Stomach (tissue), 19 donors: ENCODE measurements at regions of chr2 and their contacts with region 1.

Region 1: GRCh38 chr2:135709992-135710391 is 31.7 kb upstream of the UBXN4 start:
- DNase-seq: peak; percentile 67 to 79
- H3K4me3 ChIP-seq: no peak overlapping the region
- H3K27ac ChIP-seq: no peak overlapping the region
- H3K4me1 ChIP-seq: no peaks in the 10 kb centered on the region
- H3K27me3 ChIP-seq: no peaks in the 10 kb centered on the region
- CTCF ChIP-seq: peak in 6 of 7 experiments; percentile 6 to 91 (median 88)
- EP300 ChIP-seq: no peak
- POLR2A ChIP-seq: no peak

Region 2: DNA sequence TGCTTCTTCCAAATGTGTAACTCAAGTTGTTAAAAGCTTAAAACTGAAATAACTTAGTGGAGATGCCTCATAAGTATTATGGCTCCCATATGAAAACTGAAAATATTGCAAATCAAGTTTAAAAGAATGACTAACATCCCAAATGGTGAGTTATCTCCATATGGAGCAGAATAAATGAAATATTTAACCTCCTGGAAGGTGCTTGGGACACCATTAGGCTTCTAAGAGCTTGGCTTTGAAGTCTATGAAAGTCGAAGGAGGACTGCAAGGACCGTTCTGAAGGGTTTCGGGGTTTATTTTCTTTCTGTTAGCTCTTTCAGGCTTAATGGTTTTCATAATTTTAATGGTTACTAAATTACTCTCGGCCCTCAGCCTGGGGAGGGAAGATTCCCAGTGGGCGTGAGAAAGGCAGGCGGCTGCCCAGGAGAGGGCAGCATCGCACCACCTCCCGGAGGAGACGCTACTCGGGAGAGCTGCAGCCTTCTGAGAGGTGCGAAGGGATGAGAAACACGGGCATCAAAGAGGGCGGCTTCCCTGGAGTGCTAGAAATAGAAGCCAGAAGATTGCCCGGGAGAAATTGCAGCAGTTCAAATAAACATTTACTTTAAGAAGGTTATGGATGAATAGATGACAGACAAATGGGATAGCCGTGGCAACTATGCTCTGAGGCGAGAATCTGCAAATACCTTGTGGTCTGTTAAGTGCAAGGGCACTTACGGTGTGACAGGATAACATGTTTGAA is 705.8 kb before region 1 on chr2:
- intact Hi-C with region 1: loop called (anchors 10 kb)
- DNase-seq: peak; percentile 80 to 89
- H3K4me3 ChIP-seq: no peak overlapping the region
- H3K27ac ChIP-seq: no peak overlapping the region
- H3K4me1 ChIP-seq: peaks cover 0 to 11% (median 5%) of the 10 kb centered on the region in 4 donors
- H3K27me3 ChIP-seq: peaks cover 0 to 11% (median 0%) of the 10 kb centered on the region in 3 donors
- CTCF ChIP-seq: peak in 5 of 7 experiments; percentile 69 to 89 (median 84)
- EP300 ChIP-seq: no peak
- POLR2A ChIP-seq: no peak

Region 3: GRCh38 chr2:135456431-135456830 is 253.6 kb before region 1 on chr2:
- intact Hi-C with region 1: no loop called
- DNase-seq: no peak
- H3K4me3 ChIP-seq: no peak overlapping the region
- H3K27ac ChIP-seq: no peak overlapping the region
- H3K4me1 ChIP-seq: no peaks in the 10 kb centered on the region
- H3K27me3 ChIP-seq: no peaks in the 10 kb centered on the region
- CTCF ChIP-seq: no peak
- EP300 ChIP-seq: no peak
- POLR2A ChIP-seq: no peak

Region 4: DNA sequence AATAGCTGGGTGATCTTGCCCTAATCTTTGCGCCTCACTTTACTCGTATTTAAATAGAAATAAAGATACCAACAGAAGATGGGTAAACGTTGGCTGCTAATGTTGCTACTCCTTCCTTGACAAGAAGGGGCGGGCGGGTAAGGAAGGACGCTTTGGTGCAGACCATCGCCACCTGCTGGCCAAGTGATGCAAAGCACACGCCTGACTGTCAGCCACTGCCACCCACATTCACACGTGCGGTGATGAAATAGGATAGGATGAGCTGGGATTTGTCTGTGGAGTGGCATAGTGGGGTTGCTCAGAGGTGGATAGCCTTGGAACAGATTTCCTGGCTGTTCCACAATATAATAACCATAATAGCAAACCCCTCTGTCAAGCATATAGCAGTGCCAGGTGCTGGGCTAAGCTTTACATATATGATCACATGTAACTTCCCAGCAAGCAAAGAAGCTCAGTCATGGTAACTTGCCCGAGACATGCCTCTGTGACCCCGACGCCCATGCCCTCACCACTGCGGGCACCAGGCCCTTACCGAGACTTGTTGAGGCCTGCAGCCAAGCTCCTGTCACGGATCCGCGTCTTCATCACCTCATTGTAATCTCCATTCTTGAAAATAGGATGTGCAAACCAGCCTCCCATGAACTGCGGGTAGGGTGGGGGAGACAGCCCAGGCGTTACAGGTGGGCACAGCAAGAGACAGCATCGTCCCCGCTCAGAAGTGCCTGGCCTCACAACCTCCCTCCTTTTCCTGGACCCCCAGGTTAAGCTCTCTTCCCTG is 87.7 kb after region 1 on chr2:
- intact Hi-C with region 1: no loop called
- DNase-seq: peak; percentile 78 to 91
- H3K4me3 ChIP-seq: no peak overlapping the region
- H3K27ac ChIP-seq: no peak overlapping the region
- H3K4me1 ChIP-seq: peaks cover 0 to 6% (median 2%) of the 10 kb centered on the region in 4 donors
- H3K27me3 ChIP-seq: no peaks in the 10 kb centered on the region
- CTCF ChIP-seq: peak in 5 of 7 experiments; percentile 60 to 90 (median 82)
- EP300 ChIP-seq: no peak
- POLR2A ChIP-seq: no peak

Region 5: DNA sequence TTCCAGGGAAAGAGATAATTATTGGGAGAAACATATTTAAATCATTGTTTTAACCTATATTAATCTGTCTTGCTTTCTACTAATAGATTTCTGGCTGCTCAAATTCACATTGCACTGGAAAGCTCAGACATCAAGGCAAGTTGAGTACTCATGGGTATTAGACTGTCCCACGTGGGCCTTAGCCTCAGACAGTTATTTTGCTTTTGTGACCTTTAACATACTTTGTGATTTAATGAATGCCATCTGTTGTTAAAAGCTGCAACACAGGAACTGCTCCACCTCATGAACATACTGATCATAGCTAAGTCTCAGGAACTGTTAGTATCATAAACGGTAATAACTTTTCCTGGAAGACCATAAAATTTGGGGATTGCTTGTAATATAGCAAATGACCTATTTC is 129.7 kb after region 1 on chr2:
- intact Hi-C with region 1: no loop called
- DNase-seq: peak in 1 of 2 donors; percentile 22
- H3K4me3 ChIP-seq: no peak overlapping the region
- H3K27ac ChIP-seq: peak overlapping the region in 2 of 5 donors; percentile 19 to 55
- H3K4me1 ChIP-seq: peaks cover 0 to 10% (median 0%) of the 10 kb centered on the region in 4 donors
- H3K27me3 ChIP-seq: no peaks in the 10 kb centered on the region
- CTCF ChIP-seq: no peak
- EP300 ChIP-seq: no peak
- POLR2A ChIP-seq: no peak